Motor neuron (in vitro differentiated cells): ENCODE measurements at regions of chr18 and their contacts with region 1.

Region 1: DNA sequence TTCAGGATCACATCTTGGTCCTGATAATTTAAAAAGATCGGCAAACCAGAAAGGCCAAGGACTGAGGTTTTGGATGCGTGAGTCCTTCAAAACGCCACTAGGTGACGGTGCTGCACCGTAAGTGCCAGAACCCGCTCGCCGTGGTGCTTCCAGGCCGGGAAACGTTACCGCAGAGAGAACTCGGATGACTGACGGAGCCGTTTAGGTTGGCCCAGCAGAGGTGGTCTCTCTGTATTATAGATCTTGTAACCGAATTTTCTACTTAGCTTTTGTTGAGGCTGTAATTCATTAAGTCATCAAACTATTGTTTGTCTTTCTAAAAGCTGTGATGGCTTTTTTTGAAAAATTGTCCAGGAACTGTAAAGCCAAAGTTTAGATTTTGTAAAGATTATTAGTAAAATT is 39.8 kb upstream of the ADCYAP1 start:
- ATAC-seq: peak; percentile 44 to 98 (median 74)
- H3K4me3 ChIP-seq: no peak overlapping the region
- H3K27ac ChIP-seq: no peak overlapping the region
- H3K4me1 ChIP-seq: no peaks in the 10 kb centered on the region

Region 2: DNA sequence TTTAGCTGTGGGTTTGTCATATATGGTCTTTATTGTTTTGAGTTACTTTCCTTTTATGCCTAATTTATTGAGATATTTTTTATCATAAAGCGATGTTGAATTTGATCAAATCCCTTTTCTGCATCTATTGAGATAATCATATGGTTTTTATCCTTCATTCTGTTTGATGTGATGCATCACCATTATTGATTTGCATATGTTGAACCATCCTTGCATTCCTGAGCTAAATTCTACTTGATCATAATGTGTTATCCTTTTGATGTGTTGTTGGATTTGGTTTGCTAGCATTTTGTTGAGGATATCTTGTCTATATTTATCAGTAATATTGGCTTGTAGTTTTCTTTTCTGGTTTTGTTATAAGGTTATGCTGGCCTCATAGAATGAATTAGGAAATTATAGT is 348.3 kb after region 1 on chr18:
- in situ Hi-C with region 1: loop called in 1 of 9 experiments (anchors 25 kb)
- ATAC-seq: no peak
- H3K4me3 ChIP-seq: no peak overlapping the region
- H3K27ac ChIP-seq: no peak overlapping the region
- H3K4me1 ChIP-seq: no peaks in the 10 kb centered on the region

Region 3: GRCh38 chr18:1526991-1527390 is 662.1 kb after region 1 on chr18:
- in situ Hi-C with region 1: loop called in 1 of 9 experiments (anchors 25 kb)
- ATAC-seq: no peak
- H3K4me3 ChIP-seq: no peak overlapping the region
- H3K27ac ChIP-seq: no peak overlapping the region
- H3K4me1 ChIP-seq: no peaks in the 10 kb centered on the region

Region 4: GRCh38 chr18:2223849-2224248 is 1359.0 kb after region 1 on chr18:
- in situ Hi-C with region 1: loop called in 2 of 9 experiments (anchors 25 kb)
- ATAC-seq: peak; percentile 44 to 95 (median 67)
- H3K4me3 ChIP-seq: no peak overlapping the region
- H3K27ac ChIP-seq: no peak overlapping the region
- H3K4me1 ChIP-seq: peaks cover 0 to 9% of the 10 kb centered on the region in 2 donors

Region 5: DNA sequence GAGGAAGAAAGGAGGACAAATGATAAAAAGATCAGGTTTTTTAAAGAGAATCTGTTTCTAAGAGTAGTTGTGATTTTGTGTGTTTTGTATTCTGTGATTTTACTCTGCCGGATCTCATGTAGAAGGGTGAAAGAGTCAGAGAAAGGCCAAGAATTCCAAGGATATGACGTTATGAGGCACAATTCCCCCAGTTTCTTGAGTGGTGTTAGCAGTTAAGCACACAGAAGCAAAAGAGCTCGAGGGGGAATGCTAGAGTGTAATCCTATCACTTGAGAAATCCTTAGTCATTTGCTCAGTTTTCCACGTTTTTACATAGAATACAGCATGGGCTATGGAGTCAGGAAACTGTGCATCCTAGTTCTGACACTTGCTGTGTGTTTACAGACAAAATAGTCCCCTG is 1671.6 kb after region 1 on chr18:
- in situ Hi-C with region 1: loop called in 2 of 9 experiments (anchors 10 to 25 kb)
- ATAC-seq: no peak
- H3K4me3 ChIP-seq: no peak overlapping the region
- H3K27ac ChIP-seq: no peak overlapping the region
- H3K4me1 ChIP-seq: no peaks in the 10 kb centered on the region

Region 6: GRCh38 chr18:2571200-2572143 is 1706.6 kb after region 1 on chr18 and contains the starts of genes METTL4 and NDC80:
- in situ Hi-C with region 1: loop called in 4 of 9 experiments (anchors 25 kb)
- ATAC-seq: peak; percentile 81 to 94 (median 90)
- H3K4me3 ChIP-seq: peak within 1 kb of the TSS; percentile 89 to 96 (median 92)
- H3K27ac ChIP-seq: peak within 1 kb of the TSS; percentile 100
- H3K4me1 ChIP-seq: peaks cover 9 to 11% of the 10 kb centered on the region in 2 donors
- total RNA-seq, gene METTL4: 4.7 to 14.1 (median 7.6) TPM
- total RNA-seq, gene NDC80: 1.7 to 42.4 (median 4.3) TPM